BJ (cell line): ENCODE measurements at regions of chr11 and their contacts with region 1.

Region 1: GRCh38 chr11:69296890-69297786 is 3.2 kb downstream of the MYEOV start:
- DNase-seq: peak; percentile 98
- H3K4me3 ChIP-seq: no peak overlapping the region
- H3K27me3 ChIP-seq: no peaks in the 10 kb centered on the region
- CTCF ChIP-seq: no peak

Region 2: DNA sequence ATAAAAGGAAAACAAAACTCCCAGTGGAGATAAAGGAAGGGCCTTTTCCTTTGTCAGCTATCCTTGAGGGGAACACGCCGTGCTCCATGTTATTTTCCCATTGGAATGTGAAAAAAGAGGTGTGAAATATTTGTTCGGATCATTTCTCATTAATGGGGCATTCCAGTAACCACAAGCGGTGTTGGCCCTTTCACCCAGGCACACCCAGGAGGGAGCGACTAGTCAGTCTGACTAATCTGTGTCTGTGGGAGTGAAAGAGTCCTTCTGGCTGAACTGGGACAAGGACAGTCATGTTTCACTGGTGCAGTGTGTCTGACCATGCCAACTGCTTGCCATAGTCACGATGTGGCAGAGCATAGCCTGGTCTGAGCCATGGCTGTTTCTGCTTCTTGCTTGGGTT is 16.1 kb before region 1 on chr11:
- CTCF ChIA-PET with region 1: interaction called, 17 read pairs
- POLR2A ChIA-PET with region 1: no interaction called
- DNase-seq: peak; percentile 73
- H3K4me3 ChIP-seq: no peak overlapping the region
- H3K27me3 ChIP-seq: peaks cover 3% of the 10 kb centered on the region
- CTCF ChIP-seq: no peak